Activated CD4-positive, alpha-beta memory T cell treated with anti-CD3 and anti-CD28 coated beads for 36 hours (primary cell): ENCODE measurements at regions of chr4 and their contacts with region 1.

Region 1: DNA sequence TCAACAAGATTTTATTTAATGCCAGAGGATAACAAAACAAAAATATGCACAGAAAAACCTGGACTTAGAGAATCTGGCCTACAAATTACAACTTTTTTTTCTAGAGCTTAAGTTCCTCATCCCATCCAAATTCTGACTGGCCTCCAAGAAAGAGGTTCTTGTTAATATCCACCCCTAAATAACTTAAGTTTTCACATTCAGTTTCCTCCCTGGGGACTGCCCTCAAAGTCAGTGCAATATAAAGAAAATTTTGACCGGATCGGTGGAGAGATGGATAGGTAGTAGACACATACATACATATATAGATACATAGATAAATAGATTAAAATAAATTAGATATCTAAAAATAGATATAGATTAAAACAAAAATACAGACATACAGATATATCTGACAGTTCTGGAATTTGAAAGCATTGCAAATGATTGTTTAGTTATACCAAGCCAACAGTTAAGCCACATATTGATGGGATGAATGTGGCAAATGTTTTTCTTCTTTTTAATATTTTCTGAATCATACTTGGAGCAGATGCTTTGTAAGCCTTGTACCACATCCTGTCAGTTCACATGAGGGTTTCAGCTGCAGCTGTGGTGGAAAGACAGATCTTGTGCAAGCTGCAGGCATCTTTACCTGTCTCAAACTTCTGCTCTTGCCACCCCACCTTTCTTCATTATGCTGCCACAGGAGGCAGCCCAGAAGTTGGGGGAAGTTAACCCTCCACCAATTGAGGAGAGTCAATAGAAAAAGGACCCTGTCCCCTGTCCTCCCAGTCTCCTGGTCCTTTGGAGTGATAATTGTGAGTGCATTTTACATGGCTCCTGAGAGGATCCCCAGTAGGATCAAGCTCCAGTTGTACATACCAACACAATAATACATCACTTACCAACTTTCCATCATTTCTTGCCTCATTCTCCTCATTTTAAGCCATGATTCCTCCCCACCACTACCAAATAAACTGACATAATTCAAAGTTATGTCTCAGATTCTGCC is 58.5 kb upstream of the PRDM8 start:
- DNase-seq: peak; percentile 77
- H3K4me3 Mint-ChIP-seq: no peak overlapping the region
- H3K27ac Mint-ChIP-seq: peak overlapping the region; percentile 64
- H3K4me1 Mint-ChIP-seq: peaks cover 57% of the 10 kb centered on the region
- H3K27me3 Mint-ChIP-seq: no peaks in the 10 kb centered on the region

Region 2: DNA sequence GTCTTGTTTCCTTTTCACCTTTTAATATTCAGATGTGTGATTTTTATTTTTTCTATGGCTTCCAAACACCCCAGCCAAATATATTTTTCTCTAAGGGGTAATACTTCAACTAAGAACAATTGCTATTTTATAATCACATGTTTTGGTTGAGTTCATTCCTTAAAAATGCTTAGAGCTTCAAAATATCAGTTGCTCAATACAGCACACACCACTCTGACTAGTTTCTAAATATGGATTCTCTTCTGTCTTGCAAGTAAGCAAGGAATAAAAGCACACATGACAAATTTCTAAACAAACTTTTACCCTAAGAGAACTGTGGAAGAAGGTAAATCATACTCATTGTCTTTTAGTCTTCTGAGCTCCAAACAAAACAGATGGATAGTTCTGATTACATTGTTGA is 93.1 kb before region 1 on chr4:
- CTCF ChIA-PET with region 1: no interaction called
- POLR2A ChIA-PET with region 1: no interaction called
- intact Hi-C with region 1: no loop called
- DNase-seq: no peak
- H3K4me3 Mint-ChIP-seq: no peak overlapping the region
- H3K27ac Mint-ChIP-seq: no peak overlapping the region
- H3K4me1 Mint-ChIP-seq: peaks cover 37% of the 10 kb centered on the region
- H3K27me3 Mint-ChIP-seq: no peaks in the 10 kb centered on the region

Region 3: GRCh38 chr4:80153874-80154544 is 15.2 kb after region 1 on chr4:
- CTCF ChIA-PET with region 1: no interaction called
- POLR2A ChIA-PET with region 1: interaction called, 5 read pairs
- intact Hi-C with region 1: loop called (anchors 1 kb)
- DNase-seq: no peak
- H3K4me3 Mint-ChIP-seq: peak overlapping the region; percentile 6
- H3K27ac Mint-ChIP-seq: peak overlapping the region; percentile 52
- H3K4me1 Mint-ChIP-seq: peaks cover 20% of the 10 kb centered on the region
- H3K27me3 Mint-ChIP-seq: no peaks in the 10 kb centered on the region